B cell (primary cell): ENCODE measurements at regions of chr3 and their contacts with region 1.

Region 1: GRCh38 chr3:45612918-45613602 is 18.5 kb downstream of the LIMD1 start:
- DNase-seq: peak; percentile 73
- ATAC-seq: peak; percentile 67
- H3K4me3 ChIP-seq: peak overlapping the region in 1 of 5 experiments; percentile 4
- H3K4me3 Mint-ChIP-seq: peak overlapping the region; percentile 65
- H3K27ac ChIP-seq: peak overlapping the region in 1 of 2 donors; percentile 42
- H3K27ac Mint-ChIP-seq: peak overlapping the region; percentile 47
- H3K4me1 ChIP-seq: peaks cover 51 to 63% of the 10 kb centered on the region in 2 donors
- H3K4me1 Mint-ChIP-seq: peaks cover 85% of the 10 kb centered on the region
- H3K27me3 ChIP-seq: no peaks in the 10 kb centered on the region
- H3K27me3 Mint-ChIP-seq: no peaks in the 10 kb centered on the region
- CTCF ChIP-seq: no peak

Region 2: GRCh38 chr3:45567730-45568172 is 45.3 kb before region 1 on chr3:
- CTCF ChIA-PET with region 1: no interaction called
- POLR2A ChIA-PET with region 1: no interaction called
- intact Hi-C with region 1: loop called (anchors 5 kb)
- DNase-seq: peak; percentile 78
- ATAC-seq: peak; percentile 75
- H3K4me3 ChIP-seq: no peak overlapping the region
- H3K4me3 Mint-ChIP-seq: peak overlapping the region; percentile 71
- H3K27ac ChIP-seq: peak overlapping the region; percentile 49 to 69
- H3K27ac Mint-ChIP-seq: peak overlapping the region; percentile 84
- H3K4me1 ChIP-seq: peaks cover 50 to 58% of the 10 kb centered on the region in 2 donors
- H3K4me1 Mint-ChIP-seq: peaks cover 54% of the 10 kb centered on the region
- H3K27me3 ChIP-seq: no peaks in the 10 kb centered on the region
- H3K27me3 Mint-ChIP-seq: no peaks in the 10 kb centered on the region
- CTCF ChIP-seq: no peak

Region 3: DNA sequence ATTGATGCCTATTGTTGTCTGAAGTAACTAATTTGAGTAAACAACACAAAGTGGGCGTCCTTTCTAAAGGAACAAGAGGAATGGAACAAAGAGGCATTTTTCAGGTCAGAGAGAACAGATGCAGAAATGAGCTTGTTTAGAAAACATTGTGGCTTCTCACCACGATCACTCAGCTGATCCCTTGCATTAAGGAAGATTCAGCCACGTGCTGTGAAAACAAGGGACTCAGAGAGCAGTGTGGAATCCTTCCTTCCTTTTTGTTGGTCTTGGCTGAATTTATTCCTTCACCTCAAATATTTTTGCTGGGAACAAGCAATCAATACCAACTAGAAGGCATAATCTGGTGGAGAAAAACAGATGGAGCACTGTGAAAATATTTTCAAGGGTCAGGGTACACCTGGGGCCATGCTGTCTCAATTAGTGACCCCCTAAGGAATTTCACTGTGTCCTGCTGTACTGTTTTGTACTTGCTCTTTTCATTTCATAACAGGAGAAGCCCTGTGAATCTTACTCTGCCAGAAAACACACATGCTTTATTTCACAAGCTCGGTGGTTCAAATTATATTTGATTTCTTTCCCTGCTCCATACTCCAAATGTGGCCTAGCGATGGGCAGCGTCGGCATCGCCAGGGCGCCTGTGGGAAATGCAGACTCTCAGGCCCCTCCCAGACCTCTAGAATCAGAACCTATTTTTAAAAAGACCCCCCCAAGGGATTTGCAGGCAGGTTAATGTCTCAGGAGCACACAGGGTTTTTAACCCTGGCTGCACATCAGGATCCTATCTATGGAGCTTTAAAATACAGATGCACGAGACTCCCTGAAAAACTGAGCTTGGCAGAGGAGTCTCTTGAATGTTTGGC is 194.9 kb after region 1 on chr3:
- CTCF ChIA-PET with region 1: no interaction called
- POLR2A ChIA-PET with region 1: no interaction called
- intact Hi-C with region 1: no loop called
- DNase-seq: no peak
- ATAC-seq: no peak
- H3K4me3 ChIP-seq: no peak overlapping the region
- H3K4me3 Mint-ChIP-seq: no peak overlapping the region
- H3K27ac ChIP-seq: no peak overlapping the region
- H3K27ac Mint-ChIP-seq: no peak overlapping the region
- H3K4me1 ChIP-seq: no peaks in the 10 kb centered on the region
- H3K4me1 Mint-ChIP-seq: no peaks in the 10 kb centered on the region
- H3K27me3 ChIP-seq: no peaks in the 10 kb centered on the region
- H3K27me3 Mint-ChIP-seq: no peaks in the 10 kb centered on the region
- CTCF ChIP-seq: no peak